Activated CD4-positive, alpha-beta T cell treated with anti-CD3 and anti-CD28 coated beads for 36 hours (primary cell): ENCODE measurements at regions of chr6 and their contacts with region 1.

Region 1: DNA sequence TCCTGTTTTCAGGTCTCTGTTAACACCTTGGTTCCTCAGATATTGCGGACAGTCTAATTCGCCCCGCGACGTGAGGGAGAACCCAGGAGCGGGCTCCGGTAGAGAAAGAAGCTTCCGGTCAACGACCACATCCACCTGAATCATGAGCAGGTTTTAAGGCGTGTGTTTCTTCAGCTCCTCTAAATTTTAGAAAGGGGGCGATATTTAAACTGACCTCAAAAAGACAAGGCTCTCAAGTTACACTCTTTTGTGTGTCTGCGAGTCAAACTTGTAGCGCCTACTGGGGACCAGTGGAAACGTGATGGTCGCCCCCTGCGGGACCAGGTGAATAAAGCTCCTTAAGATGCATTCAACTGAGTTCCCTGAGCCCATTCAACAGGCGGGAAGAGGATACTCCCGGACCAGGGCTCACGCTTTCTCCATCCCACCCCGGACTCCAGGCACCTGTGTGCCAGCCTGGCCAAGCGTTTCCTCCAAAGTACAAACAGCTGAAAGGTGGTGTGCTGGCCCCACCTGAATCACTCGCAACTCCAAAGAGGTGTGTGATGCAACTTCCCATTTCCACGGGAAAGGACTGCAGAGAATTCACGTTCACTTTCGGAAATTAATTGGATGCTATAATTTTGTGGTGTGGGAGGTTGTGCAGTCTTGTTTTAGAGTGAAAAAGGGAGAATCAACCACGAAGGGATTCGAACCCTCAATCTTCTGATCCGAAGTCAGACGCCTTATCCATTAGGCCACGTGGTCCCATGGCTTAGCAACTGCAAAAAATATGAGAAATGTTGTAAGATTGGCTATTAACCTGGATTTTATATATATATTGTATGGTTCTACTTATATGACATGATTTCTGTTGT is 17.0 kb downstream of the GPX5 start:
- DNase-seq: peak; percentile 80
- ATAC-seq: peak; percentile 62
- H3K4me3 Mint-ChIP-seq: peak overlapping the region; percentile 72
- H3K27ac Mint-ChIP-seq: peak overlapping the region; percentile 75
- H3K4me1 Mint-ChIP-seq: peaks cover 36% of the 10 kb centered on the region
- H3K27me3 Mint-ChIP-seq: peaks cover 38% of the 10 kb centered on the region

Region 2: DNA sequence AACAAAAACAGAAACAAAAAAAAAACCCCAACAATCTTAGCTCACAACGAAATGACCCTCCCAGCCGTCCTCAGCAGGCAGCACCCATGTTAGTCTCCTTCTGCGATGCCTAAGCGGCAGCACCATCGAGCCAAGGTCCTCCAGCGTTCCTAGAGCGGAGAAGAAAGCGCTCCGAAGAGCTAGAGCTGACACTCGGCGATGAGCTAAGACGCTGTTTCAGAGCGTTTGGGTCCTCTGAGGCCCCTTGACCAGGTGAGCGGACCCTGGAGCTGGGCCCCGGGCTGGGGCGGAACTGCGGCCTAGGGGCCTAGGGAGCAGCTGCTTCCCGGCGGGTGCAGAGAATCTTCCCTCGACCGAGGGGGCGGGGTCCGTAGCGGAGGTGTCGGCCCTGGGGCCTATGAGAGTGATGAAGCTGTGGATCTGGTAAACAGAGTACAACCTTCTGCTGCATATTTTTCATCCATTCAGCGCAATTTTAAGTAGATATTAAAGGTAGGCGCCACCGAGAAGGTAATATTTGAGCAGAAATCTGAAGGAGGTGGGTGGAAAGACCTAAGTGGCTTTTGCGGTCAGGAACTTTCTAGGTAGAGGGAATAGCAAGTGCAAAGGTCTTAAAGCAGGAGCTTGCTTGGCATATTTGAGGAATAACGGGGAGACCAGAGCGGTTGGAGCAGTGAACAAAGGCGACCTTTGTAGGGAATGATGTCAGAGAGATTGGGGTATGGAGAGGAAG is 275.5 kb before region 1 on chr6 and contains the start of gene ZSCAN26:
- CTCF ChIA-PET with region 1: no interaction called
- POLR2A ChIA-PET with region 1: no interaction called
- intact Hi-C with region 1: loop called in 1 of 2 experiments (anchors 1 kb)
- DNase-seq: peak; percentile 91
- ATAC-seq: peak; percentile 90
- H3K4me3 Mint-ChIP-seq: no peak within 1 kb of the TSS
- H3K27ac Mint-ChIP-seq: no peak within 1 kb of the TSS
- H3K4me1 Mint-ChIP-seq: peaks cover 32% of the 10 kb centered on the region
- H3K27me3 Mint-ChIP-seq: no peaks in the 10 kb centered on the region
- total RNA-seq, gene ZSCAN26: 5.0 to 6.7 TPM

Region 3: GRCh38 chr6:28443112-28443773 is 99.4 kb before region 1 on chr6 and contains the start of gene ZSCAN23:
- CTCF ChIA-PET with region 1: interaction called, 3 read pairs
- POLR2A ChIA-PET with region 1: no interaction called
- intact Hi-C with region 1: loop called in 1 of 2 experiments (anchors 1 kb)
- DNase-seq: peak; percentile 91
- ATAC-seq: peak; percentile 92
- H3K4me3 Mint-ChIP-seq: peak within 1 kb of the TSS; percentile 96
- H3K27ac Mint-ChIP-seq: peak within 1 kb of the TSS; percentile 91
- H3K4me1 Mint-ChIP-seq: peaks cover 32% of the 10 kb centered on the region
- H3K27me3 Mint-ChIP-seq: peaks cover 16% of the 10 kb centered on the region
- total RNA-seq, gene ZSCAN23: 1.9 to 2.9 TPM

Region 4: GRCh38 chr6:28586962-28587745 is 44.5 kb after region 1 on chr6:
- CTCF ChIA-PET with region 1: interaction called, 7 read pairs
- POLR2A ChIA-PET with region 1: no interaction called
- intact Hi-C with region 1: loop called in 1 of 2 experiments (anchors 2 kb)
- DNase-seq: peak; percentile 83
- ATAC-seq: peak; percentile 87
- H3K4me3 Mint-ChIP-seq: peak overlapping the region; percentile 84
- H3K27ac Mint-ChIP-seq: peak overlapping the region; percentile 64
- H3K4me1 Mint-ChIP-seq: peaks cover 34% of the 10 kb centered on the region
- H3K27me3 Mint-ChIP-seq: peaks cover 55% of the 10 kb centered on the region

Region 5: DNA sequence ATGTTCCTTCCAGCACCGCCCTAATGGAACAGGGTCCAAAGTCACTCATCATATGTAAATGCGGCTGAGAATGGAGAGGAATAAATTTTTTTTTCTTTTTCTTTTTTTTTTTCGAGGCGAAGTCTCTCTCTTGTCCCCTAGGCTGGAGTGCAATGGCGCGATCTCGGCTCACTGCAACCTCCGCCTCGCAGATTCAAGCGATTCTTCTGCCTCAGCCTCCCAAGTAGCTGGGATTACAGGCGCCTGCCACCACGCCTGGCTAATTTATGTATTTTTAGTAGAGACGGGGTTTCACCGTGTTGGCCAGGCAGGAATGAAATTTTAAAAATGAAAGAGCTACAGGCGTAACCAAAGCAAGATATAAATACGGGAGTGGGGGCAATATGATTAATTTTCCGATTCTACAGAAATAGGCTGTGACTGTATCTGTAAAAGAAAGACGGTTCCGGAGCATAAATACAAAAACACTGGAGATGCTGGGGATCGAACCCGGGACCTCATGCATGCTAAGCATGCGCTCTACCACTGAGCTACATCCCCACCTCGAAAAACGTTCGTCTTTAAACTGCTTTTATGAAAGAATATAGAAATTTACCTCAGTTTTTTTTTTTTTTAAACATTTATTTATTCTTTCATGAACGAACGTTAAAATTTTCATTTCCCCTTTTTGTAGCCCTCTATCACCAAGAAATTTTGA is 115.2 kb after region 1 on chr6:
- CTCF ChIA-PET with region 1: interaction called, 4 read pairs
- POLR2A ChIA-PET with region 1: no interaction called
- intact Hi-C with region 1: loop called in 1 of 2 experiments (anchors 1 kb)
- DNase-seq: peak; percentile 84
- ATAC-seq: peak; percentile 94
- H3K4me3 Mint-ChIP-seq: peak overlapping the region; percentile 77
- H3K27ac Mint-ChIP-seq: peak overlapping the region; percentile 76
- H3K4me1 Mint-ChIP-seq: peaks cover 24% of the 10 kb centered on the region
- H3K27me3 Mint-ChIP-seq: peaks cover 50% of the 10 kb centered on the region

Region 6: DNA sequence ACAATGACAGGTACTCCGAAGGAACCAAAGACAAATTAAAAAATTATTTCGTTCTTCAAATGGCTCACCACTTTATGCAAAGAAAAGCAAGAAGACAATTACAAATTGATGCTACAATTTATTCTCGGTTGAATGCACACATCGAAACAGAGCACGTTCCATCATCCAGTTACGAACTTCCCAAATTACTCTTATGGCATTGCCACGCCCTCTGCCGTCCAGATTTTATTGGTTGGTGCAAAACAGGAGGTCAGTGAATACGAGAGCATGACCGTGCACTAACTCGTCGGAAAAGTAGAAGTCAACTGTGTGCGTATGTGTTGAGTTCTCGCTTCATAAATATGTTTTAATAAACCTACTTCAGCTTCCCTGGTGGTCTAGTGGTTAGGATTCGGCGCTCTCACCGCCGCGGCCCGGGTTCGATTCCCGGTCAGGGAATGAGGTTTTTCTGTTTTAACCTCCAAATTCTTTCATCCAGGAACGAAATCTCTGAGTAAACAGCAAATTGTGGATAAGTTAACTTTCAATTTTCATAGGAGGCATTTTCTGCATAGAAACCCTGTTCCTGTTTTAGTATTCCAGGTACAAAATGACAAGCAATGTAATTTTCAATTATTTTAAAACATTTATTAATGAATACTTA is 439.3 kb after region 1 on chr6:
- CTCF ChIA-PET with region 1: no interaction called
- POLR2A ChIA-PET with region 1: no interaction called
- intact Hi-C with region 1: loop called in 1 of 2 experiments (anchors 5 kb)
- DNase-seq: peak; percentile 82
- ATAC-seq: peak; percentile 42
- H3K4me3 Mint-ChIP-seq: peak overlapping the region; percentile 86
- H3K27ac Mint-ChIP-seq: peak overlapping the region; percentile 79
- H3K4me1 Mint-ChIP-seq: peaks cover 42% of the 10 kb centered on the region
- H3K27me3 Mint-ChIP-seq: peaks cover 47% of the 10 kb centered on the region